Activated B cell treated with CpG ODN at 0.5 μM for 24 hours (primary cell): ENCODE measurements at regions of chr3 and their contacts with region 1.

Region 1: DNA sequence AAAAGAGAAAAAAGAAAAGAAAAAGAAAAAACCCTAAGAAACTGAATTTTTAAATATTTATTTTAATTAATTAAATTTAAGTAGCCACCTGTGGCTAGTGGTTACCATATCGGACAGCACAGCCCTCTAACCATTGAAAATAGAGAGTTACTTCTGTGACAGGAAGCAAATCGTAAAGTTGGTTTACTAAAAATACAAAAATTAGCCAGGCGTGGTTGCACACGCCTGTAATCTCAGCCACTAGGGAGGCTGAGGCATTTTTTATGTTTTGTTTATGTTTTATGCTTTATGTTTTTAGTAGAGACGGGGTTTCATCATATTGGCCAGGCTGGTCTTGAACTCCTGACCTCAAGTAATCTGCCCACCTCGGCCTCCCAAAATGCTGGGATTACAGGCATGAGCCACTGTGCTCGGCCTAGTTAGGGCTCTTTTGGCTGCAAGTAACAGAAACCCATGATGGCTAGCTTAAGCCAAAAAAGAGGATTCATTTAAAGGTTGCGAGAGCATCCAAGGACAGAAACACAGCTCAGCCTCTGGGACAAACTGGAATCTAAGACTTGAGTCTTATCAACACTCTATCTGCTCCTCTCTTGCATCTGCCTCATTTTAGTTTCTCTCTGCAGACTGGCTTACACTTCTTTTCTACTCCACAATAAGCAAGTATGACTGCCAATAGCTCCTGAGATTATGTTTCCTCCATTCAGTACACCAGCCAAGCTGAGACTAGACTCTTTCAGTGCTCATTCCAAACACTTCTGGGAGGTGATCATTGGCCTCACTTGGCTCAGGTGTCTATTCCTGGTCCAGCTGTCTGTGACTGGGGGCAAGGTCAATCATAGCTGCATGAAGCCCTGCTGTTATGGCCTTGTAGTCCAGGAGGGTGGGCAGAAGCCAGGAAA is 6.8 kb upstream of the SKIL start:
- DNase-seq: no peak
- ATAC-seq: peak; percentile 38
- H3K4me3 Mint-ChIP-seq: peak overlapping the region; percentile 66
- H3K27ac Mint-ChIP-seq: peak overlapping the region; percentile 80
- H3K4me1 Mint-ChIP-seq: peaks cover 85% of the 10 kb centered on the region
- H3K27me3 Mint-ChIP-seq: no peaks in the 10 kb centered on the region
- CTCF ChIP-seq: no peak

Region 2: DNA sequence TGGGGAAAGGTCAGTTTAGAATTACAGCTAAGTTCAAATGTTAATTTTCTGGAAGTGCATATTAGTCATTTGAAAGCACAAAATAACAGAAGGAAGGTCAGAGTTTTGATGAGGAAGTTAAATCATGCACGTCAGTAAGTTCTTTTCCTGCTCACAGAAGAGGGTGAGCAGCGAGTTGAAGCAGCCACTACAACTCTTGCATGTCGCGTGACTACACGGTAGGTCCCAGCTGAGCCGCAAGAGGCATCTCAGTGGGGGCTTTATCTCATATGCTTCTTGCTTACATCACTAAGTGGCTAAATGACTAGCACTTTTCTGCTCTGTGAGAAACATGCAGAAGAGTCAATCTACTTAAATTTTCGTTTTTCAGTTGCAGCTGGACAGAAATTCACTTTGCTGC is 405.5 kb before region 1 on chr3:
- CTCF ChIA-PET with region 1: no interaction called
- POLR2A ChIA-PET with region 1: no interaction called
- intact Hi-C with region 1: loop called (anchors 1 kb)
- DNase-seq: peak; percentile 54
- ATAC-seq: peak; percentile 91
- H3K4me3 Mint-ChIP-seq: peak overlapping the region; percentile 68
- H3K27ac Mint-ChIP-seq: peak overlapping the region; percentile 93
- H3K4me1 Mint-ChIP-seq: peaks cover 93% of the 10 kb centered on the region
- H3K27me3 Mint-ChIP-seq: no peaks in the 10 kb centered on the region
- CTCF ChIP-seq: no peak

Region 3: GRCh38 chr3:170301405-170301804 is 49.4 kb before region 1 on chr3:
- CTCF ChIA-PET with region 1: no interaction called
- POLR2A ChIA-PET with region 1: no interaction called
- intact Hi-C with region 1: no loop called
- DNase-seq: no peak
- ATAC-seq: no peak
- H3K4me3 Mint-ChIP-seq: no peak overlapping the region
- H3K27ac Mint-ChIP-seq: no peak overlapping the region
- H3K4me1 Mint-ChIP-seq: peaks cover 3% of the 10 kb centered on the region
- H3K27me3 Mint-ChIP-seq: no peaks in the 10 kb centered on the region
- CTCF ChIP-seq: no peak